Uterus (tissue), 4 donors: ENCODE measurements at regions of chr3 and their contacts with region 1.

Region 1: GRCh38 chr3:177197041-177197727 is at the start of gene TBL1XR1:
- DNase-seq: peak; percentile 93 to 94
- H3K4me3 ChIP-seq: peak within 1 kb of the TSS; percentile 64 to 96
- H3K27ac ChIP-seq: peak within 1 kb of the TSS; percentile 99
- H3K4me1 ChIP-seq: peaks cover 0 to 6% of the 10 kb centered on the region in 2 donors
- H3K27me3 ChIP-seq: no peaks in the 10 kb centered on the region
- CTCF ChIP-seq: no peak
- POLR2A ChIP-seq: no peak
- total RNA-seq, gene TBL1XR1: 55.6 to 281 (median 102) TPM

Region 2: GRCh38 chr3:176848431-176849214 is 348.6 kb before region 1 on chr3:
- intact Hi-C with region 1: no loop called
- DNase-seq: no peak
- H3K4me3 ChIP-seq: no peak overlapping the region
- H3K27ac ChIP-seq: no peak overlapping the region
- H3K4me1 ChIP-seq: no peaks in the 10 kb centered on the region
- H3K27me3 ChIP-seq: no peaks in the 10 kb centered on the region
- CTCF ChIP-seq: no peak
- POLR2A ChIP-seq: no peak

Region 3: DNA sequence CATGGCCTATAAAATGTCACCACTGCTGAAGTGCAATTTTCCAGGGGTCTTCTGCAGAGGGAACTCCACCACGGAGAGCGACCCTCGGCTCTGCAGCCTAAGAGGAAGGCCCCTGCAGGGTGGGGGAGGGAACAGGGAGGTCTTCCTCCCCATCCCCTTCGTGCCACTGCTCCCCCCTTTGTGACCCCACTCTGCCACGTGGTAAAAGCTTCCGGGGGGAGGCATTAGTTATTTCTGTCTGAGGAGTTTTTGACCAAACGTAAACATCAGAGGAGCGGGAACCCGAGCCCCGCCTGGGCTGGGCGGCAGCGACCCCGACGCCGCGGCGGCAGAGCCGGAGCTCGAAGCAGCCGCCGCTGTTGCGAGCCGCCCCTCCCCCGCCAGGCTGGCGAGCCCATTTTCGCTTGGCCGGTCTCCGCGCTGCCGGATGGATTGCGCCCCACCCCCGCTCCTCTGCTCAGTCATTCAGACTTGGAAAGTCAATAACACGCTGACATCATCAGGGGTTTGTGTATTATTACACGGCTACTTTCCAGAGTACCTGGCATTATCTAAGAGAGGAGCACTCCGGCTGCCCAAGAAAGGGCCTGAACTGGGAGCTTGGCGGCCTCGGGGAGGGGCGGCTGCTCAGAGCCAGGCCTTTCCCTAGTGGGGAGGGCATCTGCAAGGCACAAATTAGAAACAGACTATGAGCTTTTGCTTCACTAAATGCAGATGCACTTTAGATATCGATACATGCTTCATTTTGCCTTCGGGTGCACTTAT is 162.6 kb after region 1 on chr3:
- intact Hi-C with region 1: loop called (anchors 1 kb)
- DNase-seq: peak; percentile 96
- H3K4me3 ChIP-seq: peak overlapping the region; percentile 19 to 39
- H3K27ac ChIP-seq: peak overlapping the region; percentile 81 to 83
- H3K4me1 ChIP-seq: peaks cover 0 to 15% of the 10 kb centered on the region in 2 donors
- H3K27me3 ChIP-seq: no peaks in the 10 kb centered on the region
- CTCF ChIP-seq: peak in 2 of 4 experiments; percentile 21 to 34
- POLR2A ChIP-seq: peak; percentile 52 to 53